ENCODE measurements at regions of chr13 and their contacts with region 1.

Region 1: DNA sequence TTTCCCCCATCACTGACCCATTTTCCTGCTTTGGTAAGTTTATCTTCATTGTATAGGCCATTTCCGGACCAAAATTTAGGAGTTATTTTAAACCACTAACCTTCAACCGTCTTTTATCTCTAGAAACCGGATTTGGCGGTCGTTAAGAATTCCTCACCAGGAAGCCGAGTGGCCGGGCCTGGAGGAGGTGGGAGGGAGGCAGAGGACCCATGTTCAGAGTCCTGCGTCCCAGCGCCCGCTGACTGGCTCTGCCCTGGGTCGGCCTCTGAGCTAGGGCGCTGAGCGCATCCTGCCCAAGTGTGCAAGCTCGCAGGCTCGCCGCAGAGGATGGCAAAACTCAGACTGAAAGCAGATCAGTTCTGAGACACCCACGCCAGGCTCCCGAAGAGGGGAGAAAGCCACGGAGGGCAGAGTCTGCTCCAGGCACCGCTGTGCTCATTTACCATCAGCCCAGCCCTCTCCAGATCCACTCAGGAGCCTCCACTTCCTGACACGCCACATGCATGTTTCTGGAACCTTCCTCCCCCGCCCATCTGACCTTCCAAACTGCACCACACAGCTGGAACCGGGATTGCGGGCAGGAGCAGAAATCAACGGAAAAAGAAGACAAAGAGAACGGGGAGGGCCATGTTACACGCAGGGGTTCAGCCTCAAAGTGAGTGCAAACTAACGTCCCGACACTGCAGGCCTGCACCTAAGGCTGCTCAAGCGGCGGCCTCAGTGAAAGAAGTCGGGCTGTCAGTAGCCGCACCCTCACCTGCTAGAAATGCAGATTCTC is 8.3 kb downstream of the COL4A1 start:
- DNase-seq: peak; percentile 75
- ATAC-seq: peak; percentile 62 to 75

Region 2: DNA sequence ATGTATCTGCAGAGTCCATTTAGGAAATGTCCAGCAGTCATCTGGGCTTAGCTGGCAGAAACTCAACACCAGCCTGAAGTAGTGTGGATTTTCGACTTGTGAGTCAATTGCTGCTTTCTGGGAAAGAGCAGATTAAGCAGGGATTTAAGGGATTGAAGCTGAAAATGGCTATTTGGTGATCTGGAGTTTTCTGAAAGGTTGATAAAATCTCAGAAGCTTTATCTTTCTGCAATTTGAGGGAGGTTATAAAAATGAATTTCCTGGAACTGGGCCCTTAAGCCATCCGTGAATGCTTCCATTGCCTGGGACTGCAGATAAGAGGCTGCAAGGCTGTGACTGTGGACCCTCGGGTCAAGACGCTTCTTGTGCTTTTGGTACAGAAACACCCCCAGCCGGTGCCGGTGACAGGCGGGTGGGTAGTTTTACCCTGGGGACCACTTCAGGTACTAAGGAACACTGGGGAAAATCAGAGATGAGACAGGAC is 53.2 kb before region 1 on chr13:
- intact Hi-C with region 1: loop called in 1 of 2 experiments (anchors 5 kb)
- DNase-seq: no peak
- ATAC-seq: no peak

Region 3: DNA sequence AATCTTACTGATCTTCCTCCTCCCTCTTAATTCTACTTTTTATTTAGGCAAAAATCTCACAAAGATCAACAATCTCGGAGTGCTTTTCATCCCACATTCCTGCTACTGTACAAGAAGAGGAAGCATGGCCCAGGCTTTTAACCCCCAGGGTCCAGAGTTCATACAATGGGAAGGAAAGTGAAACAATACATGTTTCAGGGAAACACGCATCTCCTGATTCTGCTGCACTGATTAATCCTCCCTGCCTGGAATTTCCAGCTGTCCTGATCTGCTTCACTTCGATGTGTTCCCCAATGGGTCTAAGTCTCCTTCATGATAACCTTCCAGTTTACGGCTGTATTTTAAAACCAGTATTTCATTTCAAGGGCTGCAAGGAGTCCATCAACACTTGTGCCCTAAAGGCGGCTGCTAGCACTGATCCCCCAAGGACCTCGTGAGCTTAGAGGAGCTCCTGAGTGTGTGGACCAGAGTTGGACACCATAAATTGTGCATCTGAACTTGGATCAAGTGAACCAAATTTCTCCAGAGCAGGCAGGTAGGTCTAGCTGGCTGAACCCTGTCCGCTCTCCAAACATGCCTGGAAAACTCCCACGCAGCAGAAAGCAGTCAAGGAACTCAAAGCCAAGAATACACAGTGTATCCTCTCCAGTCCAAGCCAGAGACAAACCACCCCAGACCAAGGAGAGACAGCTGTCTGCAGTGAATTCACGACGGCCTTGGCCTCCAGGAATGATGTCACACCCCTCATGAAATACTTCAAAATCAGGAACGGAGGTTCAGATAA is 36.0 kb before region 1 on chr13:
- intact Hi-C with region 1: loop called in 1 of 2 experiments (anchors 5 kb)
- DNase-seq: no peak
- ATAC-seq: peak in 1 of 2 donors; percentile 72